Activated CD8-positive, alpha-beta memory T cell treated with anti-CD3 and anti-CD28 coated beads, Interleukin-2, amount 10 ng/mL, durations not matched to agents 7 days and 5 days (primary cell): ENCODE measurements at regions of chr11 and their contacts with region 1.

Region 1: DNA sequence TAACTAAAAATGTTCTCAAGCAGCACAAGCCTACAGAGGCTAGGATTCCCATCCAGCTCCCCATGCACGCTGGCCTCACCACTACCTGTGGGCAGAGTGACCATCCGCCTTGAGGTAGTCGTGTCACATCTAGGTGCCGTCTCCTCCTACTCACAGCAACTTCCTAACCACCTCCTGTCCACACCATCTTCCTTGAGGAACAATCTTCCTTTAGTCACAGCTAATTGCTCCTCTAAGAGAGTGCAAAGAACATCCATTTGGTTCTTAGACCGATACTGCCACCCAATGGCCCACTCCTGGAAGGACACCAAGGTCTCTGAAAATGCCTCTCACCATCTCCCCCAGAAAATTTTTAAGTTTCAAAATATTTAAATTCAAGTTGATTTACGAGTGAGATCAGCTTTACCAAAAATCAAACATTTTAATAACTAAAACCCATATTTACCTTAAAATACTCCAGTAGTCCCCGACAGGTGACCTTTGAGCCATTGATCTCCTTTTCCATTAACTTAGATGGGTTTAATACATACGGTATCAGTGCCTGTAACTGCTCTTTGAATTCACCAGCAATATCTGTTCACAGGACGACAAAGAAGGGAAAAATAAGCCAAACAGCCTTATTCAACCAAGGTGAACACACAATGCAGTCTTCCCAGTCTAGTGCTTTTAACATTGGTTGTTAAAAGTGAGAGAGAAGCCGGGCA is 21.7 kb upstream of the PLAAT3 start:
- DNase-seq: peak; percentile 77
- ATAC-seq: peak; percentile 78
- H3K4me3 Mint-ChIP-seq: no peak overlapping the region
- H3K27ac Mint-ChIP-seq: no peak overlapping the region
- H3K4me1 Mint-ChIP-seq: peaks cover 23% of the 10 kb centered on the region
- H3K27me3 Mint-ChIP-seq: no peaks in the 10 kb centered on the region

Region 2: GRCh38 chr11:63508009-63508408 is 127.9 kb before region 1 on chr11:
- CTCF ChIA-PET with region 1: interaction called, 10 read pairs
- DNase-seq: peak; percentile 50
- ATAC-seq: peak; percentile 49
- H3K4me3 Mint-ChIP-seq: no peak overlapping the region
- H3K27ac Mint-ChIP-seq: no peak overlapping the region
- H3K4me1 Mint-ChIP-seq: peaks cover 5% of the 10 kb centered on the region
- H3K27me3 Mint-ChIP-seq: no peaks in the 10 kb centered on the region